ENCODE measurements at regions of chr13 and their contacts with region 1.

Region 1: DNA sequence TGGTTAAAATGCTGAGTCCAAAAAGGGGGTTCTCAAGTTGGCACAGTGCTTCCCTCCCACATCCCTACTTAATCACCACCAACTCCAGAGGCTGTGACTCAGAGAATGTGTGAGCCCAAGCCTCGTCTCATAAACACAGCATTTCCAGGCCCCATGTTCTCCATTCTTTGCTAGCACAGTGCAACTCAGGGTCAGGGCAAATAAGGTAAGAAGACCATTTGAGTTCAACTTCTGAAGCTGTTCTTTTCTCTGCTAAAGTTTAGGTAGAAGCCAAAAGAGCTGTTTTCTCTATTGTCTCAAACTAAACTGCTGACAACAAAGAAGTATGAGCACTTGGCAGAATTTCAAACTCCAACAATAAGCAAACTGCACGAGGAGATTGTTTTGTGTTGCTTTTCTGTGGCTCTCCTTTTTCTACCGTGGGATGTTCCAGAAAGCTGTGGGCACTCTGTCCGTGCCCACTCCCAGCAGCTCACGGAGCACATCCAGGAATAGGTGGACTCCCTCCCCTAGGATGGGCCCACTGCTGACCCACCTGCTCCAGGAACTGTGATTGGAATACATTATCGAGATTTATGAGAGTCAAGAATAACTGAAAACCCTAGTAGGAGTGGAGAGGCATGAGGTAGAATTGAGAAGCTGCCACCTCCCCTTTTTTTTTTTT is 494.3 kb downstream of the COG6 start:
- DNase-seq: no peak
- ATAC-seq: no peak
- H3K4me3 ChIP-seq: no peak overlapping the region
- H3K4me3 Mint-ChIP-seq: no peak overlapping the region
- H3K27ac ChIP-seq: no peak overlapping the region
- H3K27ac Mint-ChIP-seq: peak overlapping the region in 5 of 9 donors; percentile 13 to 78 (median 53)
- H3K4me1 ChIP-seq: peaks cover 0 to 33% of the 10 kb centered on the region in 2 donors
- H3K4me1 Mint-ChIP-seq: peaks cover 31 to 80% (median 69%) of the 10 kb centered on the region in 7 donors
- H3K27me3 ChIP-seq: no peaks in the 10 kb centered on the region
- H3K27me3 Mint-ChIP-seq: no peaks in the 10 kb centered on the region

Region 2: GRCh38 chr13:40096357-40096901 is 53.3 kb before region 1 on chr13:
- CTCF ChIA-PET with region 1: no interaction called
- POLR2A ChIA-PET with region 1: no interaction called
- intact Hi-C with region 1: loop called in 1 of 2 experiments (anchors 2 kb)
- DNase-seq: peak in 7 of 9 donors; percentile 7 to 51 (median 36)
- ATAC-seq: peak; percentile 66
- H3K4me3 ChIP-seq: no peak overlapping the region
- H3K4me3 Mint-ChIP-seq: peak overlapping the region in 2 of 10 donors; percentile 1 to 8
- H3K27ac ChIP-seq: no peak overlapping the region
- H3K27ac Mint-ChIP-seq: peak overlapping the region in 8 of 9 donors; percentile 2 to 68 (median 32)
- H3K4me1 ChIP-seq: peaks cover 0 to 8% of the 10 kb centered on the region in 2 donors
- H3K4me1 Mint-ChIP-seq: peaks cover 10 to 27% (median 19%) of the 10 kb centered on the region in 7 donors
- H3K27me3 ChIP-seq: no peaks in the 10 kb centered on the region
- H3K27me3 Mint-ChIP-seq: no peaks in the 10 kb centered on the region

Region 3: GRCh38 chr13:40109356-40109844 is 40.3 kb before region 1 on chr13:
- CTCF ChIA-PET with region 1: no interaction called
- POLR2A ChIA-PET with region 1: no interaction called
- intact Hi-C with region 1: loop called in 1 of 2 experiments (anchors 5 kb)
- DNase-seq: no peak
- ATAC-seq: no peak
- H3K4me3 ChIP-seq: no peak overlapping the region
- H3K4me3 Mint-ChIP-seq: peak overlapping the region in 1 of 10 donors; percentile 46
- H3K27ac ChIP-seq: no peak overlapping the region
- H3K27ac Mint-ChIP-seq: peak overlapping the region in 2 of 9 donors; percentile 2 to 43
- H3K4me1 ChIP-seq: no peaks in the 10 kb centered on the region
- H3K4me1 Mint-ChIP-seq: peaks cover 0 to 26% (median 1%) of the 10 kb centered on the region in 7 donors
- H3K27me3 ChIP-seq: no peaks in the 10 kb centered on the region
- H3K27me3 Mint-ChIP-seq: peaks cover 0 to 3% (median 0%) of the 10 kb centered on the region in 5 donors

Region 4: DNA sequence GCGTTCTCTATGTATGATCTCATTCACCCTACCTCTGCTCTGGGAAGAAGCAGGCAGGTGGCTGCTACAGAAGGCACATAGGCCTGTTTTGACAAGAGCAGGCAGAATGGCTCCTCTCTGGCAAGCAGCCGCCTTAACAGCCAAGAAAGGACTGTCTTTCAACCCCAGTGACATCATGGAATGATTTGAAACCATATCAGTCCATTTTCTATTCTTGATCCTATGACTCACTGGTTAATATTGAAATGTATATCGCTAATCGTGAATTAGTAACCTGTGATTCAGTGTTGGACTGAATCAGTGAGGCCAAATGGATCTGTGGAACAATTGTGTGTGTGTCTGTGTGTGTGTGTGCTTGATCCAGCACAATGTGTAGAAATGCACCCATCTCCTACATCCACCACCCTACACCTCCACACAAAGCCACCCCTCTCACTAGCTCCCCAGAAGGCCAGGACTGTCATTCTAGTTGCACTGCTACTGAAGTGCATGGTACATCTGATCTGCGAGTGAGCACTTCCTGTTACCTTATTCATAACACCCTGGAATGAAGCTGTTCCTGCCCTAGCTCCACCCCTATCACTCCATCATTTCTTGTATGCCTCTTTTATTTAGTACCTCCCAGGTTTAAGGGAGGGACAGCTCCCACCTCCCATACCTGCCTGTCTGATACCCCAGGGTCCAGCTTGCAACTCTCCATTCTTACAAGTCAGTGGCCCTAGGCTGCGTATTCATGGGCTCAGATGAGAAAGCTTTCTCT is 56.7 kb after region 1 on chr13:
- CTCF ChIA-PET with region 1: interaction called, 3 read pairs
- POLR2A ChIA-PET with region 1: interaction called, 3 read pairs
- intact Hi-C with region 1: loop called in 1 of 2 experiments (anchors 1 kb)
- DNase-seq: peak in 8 of 9 donors; percentile 14 to 82 (median 78)
- ATAC-seq: peak; percentile 92
- H3K4me3 ChIP-seq: peak overlapping the region; percentile 19
- H3K4me3 Mint-ChIP-seq: peak overlapping the region; percentile 60 to 86 (median 80)
- H3K27ac ChIP-seq: peak overlapping the region; percentile 73
- H3K27ac Mint-ChIP-seq: peak overlapping the region; percentile 97 to 100 (median 99)
- H3K4me1 ChIP-seq: peaks cover 44 to 70% of the 10 kb centered on the region in 2 donors
- H3K4me1 Mint-ChIP-seq: peaks cover 41 to 88% (median 84%) of the 10 kb centered on the region in 7 donors
- H3K27me3 ChIP-seq: no peaks in the 10 kb centered on the region
- H3K27me3 Mint-ChIP-seq: no peaks in the 10 kb centered on the region